ENCODE measurements at regions of chr4 and their contacts with region 1.

Region 1: GRCh38 chr4:35358001-35358584 is 886.2 kb downstream of the ARAP2 start:
- DNase-seq: no peak
- H3K4me3 ChIP-seq: no peak overlapping the region
- H3K27ac ChIP-seq: no peak overlapping the region
- H3K4me1 ChIP-seq: no peaks in the 10 kb centered on the region
- H3K27me3 ChIP-seq: no peaks in the 10 kb centered on the region
- CTCF ChIP-seq: no peak
- EP300 ChIP-seq: no peak
- POLR2A ChIP-seq: no peak

Region 2: DNA sequence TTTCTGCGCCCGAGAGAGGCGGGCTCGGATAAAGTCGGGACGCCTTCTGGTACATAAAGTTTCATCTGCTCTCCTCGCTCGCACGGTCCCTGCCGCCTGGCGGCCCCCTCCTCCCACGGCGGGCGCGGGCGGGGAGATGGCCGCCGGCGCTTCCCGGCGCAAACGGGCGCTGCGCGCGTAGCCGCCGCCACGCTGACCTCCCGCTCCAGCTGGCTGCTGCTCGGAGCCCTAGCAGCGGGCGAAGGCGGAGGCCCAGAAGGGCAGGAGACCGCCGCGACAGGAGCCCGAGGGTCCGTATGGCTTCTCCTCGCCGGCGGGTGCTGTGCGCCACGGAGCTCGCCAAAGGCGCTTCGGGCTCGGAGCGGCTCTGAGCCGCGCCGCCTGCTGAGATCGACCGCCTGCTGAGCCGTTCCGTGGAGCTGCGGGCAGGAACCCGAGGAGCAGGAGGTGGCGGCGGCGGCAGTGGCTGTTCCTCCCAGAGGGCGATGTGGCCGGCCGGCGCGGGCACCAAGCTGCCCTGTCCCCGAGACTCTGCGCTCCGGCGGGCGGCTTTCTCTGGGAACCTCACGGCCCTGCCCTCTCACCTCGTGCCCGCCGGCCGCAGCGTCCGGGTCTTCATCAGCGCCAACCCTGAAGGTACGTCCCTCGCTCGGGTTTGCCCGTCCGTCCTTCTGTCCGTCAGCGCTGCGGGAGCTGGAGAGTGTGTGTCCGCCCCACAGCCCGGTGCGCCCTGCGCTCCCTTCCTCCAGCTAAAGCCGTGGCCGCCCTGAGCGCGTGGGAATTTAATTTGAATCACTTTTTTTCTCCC is 1886.7 kb after region 1 on chr4 and contains the start of gene NWD2:
- in situ Hi-C with region 1: no loop called
- intact Hi-C with region 1: loop called (anchors 5 kb)
- DNase-seq: peak; percentile 13
- H3K4me3 ChIP-seq: peak within 1 kb of the TSS in 3 of 4 donors; percentile 3 to 48 (median 28)
- H3K27ac ChIP-seq: no peak within 1 kb of the TSS
- H3K4me1 ChIP-seq: peaks cover 0 to 19% (median 16%) of the 10 kb centered on the region in 4 donors
- H3K27me3 ChIP-seq: peaks cover 81% of the 10 kb centered on the region
- CTCF ChIP-seq: no peak
- EP300 ChIP-seq: no peak
- POLR2A ChIP-seq: no peak
- total RNA-seq, gene NWD2: 0.48 to 0.55 TPM in 2 of 4 donors, not detected in the others

Measured in transverse colon (tissue), 4 donors.